ENCODE measurements at regions of chr14 and their contacts with region 1.

Region 1: GRCh38 chr14:101707068-101707842 is 54.3 kb upstream of the PPP2R5C start:
- DNase-seq: peak; percentile 78
- CTCF ChIP-seq: peak; percentile 70

Region 2: GRCh38 chr14:101721951-101722661 is 14.9 kb after region 1 on chr14:
- CTCF ChIA-PET with region 1: interaction called, 23 read pairs
- POLR2A ChIA-PET with region 1: no interaction called
- DNase-seq: no peak
- CTCF ChIP-seq: no peak

Region 3: GRCh38 chr14:101731187-101732080 is 24.2 kb after region 1 on chr14:
- CTCF ChIA-PET with region 1: interaction called, 10 read pairs
- POLR2A ChIA-PET with region 1: no interaction called
- DNase-seq: peak; percentile 78
- CTCF ChIP-seq: no peak

Region 4: DNA sequence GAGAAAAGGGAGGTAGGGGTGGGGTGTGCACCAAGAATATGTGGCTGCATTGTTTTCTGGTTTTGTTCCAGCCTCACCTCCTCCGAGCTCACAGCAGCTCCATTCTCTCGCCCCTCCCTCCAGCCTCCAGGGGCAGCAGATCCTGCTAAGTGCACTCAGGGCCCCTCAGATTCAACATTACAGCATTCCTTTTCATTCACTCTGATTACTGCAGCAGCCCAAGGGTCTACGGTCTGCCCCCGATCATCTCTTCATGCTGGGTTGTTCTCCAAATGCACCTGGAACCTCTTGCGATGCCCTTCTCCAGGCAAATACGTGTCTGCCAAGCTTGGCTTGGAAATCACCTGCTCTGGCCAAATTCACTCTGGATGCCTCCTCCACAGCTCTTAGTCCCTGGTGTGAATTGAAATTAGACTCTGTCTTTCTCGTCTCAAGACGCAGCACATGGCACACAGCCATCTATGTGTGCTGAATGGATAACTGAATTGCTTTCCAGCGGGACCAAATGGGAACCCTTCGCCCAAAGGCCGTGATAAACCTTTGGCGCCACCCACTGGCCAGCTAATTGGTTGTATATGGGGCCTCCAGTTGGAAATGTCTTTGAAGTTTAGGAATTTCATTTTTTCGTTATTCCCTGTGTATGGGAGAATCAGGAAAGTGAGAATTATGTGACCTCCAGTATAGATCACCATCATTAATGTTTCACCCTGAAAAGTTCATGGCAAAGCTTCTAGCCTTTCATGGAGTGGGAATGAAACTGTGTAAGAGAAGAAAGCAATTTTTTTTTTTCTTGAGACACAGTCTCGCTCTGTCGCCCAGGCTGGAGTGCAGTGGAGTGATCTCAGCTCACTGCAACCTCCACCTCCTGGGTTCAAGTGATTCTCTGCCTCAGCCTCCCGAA is 389.2 kb after region 1 on chr14:
- CTCF ChIA-PET with region 1: interaction called, 13 read pairs
- POLR2A ChIA-PET with region 1: no interaction called
- DNase-seq: peak; percentile 63
- CTCF ChIP-seq: peak; percentile 80

Region 5: DNA sequence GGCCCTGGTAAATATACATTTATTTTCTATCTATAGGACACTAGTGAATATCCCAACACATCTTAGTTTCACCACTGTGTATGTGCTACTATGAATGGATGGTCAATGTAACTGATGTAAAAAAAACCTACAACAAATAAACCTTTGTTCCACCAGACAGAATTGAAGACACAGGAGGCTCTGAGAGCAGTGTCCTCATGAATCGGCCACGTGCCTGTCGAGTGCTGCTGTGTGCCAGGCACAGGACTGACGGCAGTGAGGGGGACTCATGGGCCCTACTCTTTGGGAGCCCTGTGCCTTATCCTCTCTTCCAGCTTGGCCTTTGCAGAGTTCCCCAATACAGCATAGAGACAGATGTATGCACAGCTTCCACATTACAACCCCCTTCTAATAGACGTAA is 637.2 kb after region 1 on chr14:
- CTCF ChIA-PET with region 1: no interaction called
- POLR2A ChIA-PET with region 1: no interaction called
- DNase-seq: no peak
- CTCF ChIP-seq: no peak

Measured in GM10248 (cell line).